ENCODE measurements at regions of chr2 and their contacts with region 1.

Region 1: DNA sequence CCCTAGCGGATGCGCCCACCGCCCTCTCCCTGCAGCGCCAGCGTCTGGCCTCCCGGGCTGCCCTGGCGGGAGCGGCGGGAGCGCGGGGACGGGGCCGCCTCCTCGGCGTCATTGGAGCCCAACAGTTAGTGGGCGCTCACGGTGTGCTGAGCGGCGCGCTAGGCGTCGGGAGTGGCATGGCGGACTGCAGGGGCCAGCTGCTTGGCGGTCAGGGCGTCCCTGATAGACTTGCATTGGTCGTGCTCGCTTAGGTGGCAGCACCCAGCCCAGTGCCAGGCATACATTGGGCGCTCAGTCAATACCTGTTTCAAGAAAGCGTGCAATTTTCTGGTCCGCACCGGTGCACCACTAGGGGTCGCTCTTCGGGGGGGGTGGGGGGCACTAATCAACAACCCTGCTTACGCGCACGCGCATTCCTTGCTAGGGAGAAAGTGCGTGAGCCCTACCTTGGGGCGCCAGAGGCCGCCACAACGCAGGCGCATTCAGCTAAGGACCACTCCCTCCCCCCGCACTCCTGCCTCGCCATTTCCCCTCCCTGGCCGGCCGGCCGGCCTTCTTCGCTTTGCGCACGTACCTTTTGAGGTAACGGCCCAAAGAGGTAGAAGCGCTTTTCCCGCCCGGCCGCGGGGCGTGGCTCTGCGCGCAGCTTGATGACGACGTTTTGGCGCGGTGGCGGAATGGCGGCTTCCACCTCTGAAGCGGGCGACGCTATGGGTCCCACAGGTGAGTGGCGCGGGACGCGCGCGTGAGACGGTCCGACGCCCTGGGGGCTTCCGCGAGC is 411 bp upstream of the MZT2A start:
- DNase-seq: peak; percentile 90 to 98
- H3K4me3 ChIP-seq: peak overlapping the region; percentile 72 to 97 (median 94)
- H3K27ac ChIP-seq: peak overlapping the region; percentile 94
- H3K4me1 ChIP-seq: peaks cover 0 to 8% (median 6%) of the 10 kb centered on the region in 4 experiments; a peak in 6 of 7 replicates
- H3K27me3 ChIP-seq: no peaks in the 10 kb centered on the region
- CTCF ChIP-seq: peak; percentile 63 to 86 (median 77)
- EP300 ChIP-seq: no peak
- POLR2A ChIP-seq: peak; percentile 80 to 84
- RAD21 ChIP-seq: peak; percentile 15 to 54; a peak in 3 of 4 replicates

Region 2: GRCh38 chr2:131413148-131413747 is 79.4 kb before region 1 on chr2:
- CTCF ChIA-PET with region 1: interaction called, 53 read pairs
- POLR2A ChIA-PET with region 1: interaction called, 8 read pairs
- DNase-seq: no peak
- H3K4me3 ChIP-seq: no peak overlapping the region
- H3K27ac ChIP-seq: no peak overlapping the region
- H3K4me1 ChIP-seq: no peaks in the 10 kb centered on the region
- H3K27me3 ChIP-seq: no peaks in the 10 kb centered on the region
- CTCF ChIP-seq: peak in 2 of 3 experiments; percentile 61 to 71; a peak in 2 of 4 replicates
- EP300 ChIP-seq: no peak
- POLR2A ChIP-seq: no peak
- RAD21 ChIP-seq: peak; percentile 81 to 85

Region 3: DNA sequence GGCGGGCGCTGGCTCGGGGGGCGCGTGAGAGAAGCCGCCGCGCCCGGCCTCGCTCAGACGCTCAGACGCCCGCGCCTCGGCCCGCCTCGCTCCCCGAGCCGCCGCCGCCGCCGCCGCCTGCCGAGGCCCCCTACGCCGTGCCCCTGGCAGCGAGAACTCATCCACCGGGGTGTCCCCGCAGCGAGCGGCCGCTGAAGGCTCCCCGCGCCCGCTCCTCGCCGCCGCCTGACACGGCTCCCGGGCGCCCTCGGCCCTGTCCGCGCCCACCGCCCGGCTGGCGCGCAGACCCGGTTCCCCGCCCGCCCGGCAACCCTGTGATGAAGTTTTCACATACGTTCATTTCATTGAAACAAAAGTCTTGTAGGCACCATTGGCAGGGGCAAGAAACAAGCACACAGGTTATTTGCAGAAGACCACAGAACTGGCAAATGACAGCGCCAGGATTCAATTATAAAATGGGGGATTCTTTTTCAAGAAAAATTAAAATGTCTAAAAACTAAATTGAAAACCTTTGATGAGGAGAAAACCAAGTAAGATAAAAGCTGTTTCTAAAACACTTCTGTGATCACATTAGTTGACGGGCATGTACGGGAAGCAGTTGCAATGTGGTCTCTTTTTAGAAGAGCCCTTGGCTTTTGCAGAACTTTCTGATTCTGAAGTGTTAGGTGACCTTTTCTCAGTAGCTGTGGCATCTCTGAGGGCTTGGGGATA is 67.2 kb before region 1 on chr2:
- CTCF ChIA-PET with region 1: interaction called, 13 read pairs
- POLR2A ChIA-PET with region 1: interaction called, 3 read pairs
- DNase-seq: no peak
- H3K4me3 ChIP-seq: peak overlapping the region; percentile 2 to 57 (median 16); a peak in 6 of 8 replicates
- H3K27ac ChIP-seq: no peak overlapping the region
- H3K4me1 ChIP-seq: peaks cover 0 to 11% (median 2%) of the 10 kb centered on the region in 4 experiments; a peak in 3 of 7 replicates
- H3K27me3 ChIP-seq: peaks cover 5 to 31% (median 17%) of the 10 kb centered on the region in 4 experiments
- CTCF ChIP-seq: no peak
- EP300 ChIP-seq: no peak
- POLR2A ChIP-seq: no peak
- RAD21 ChIP-seq: no peak

Region 4: DNA sequence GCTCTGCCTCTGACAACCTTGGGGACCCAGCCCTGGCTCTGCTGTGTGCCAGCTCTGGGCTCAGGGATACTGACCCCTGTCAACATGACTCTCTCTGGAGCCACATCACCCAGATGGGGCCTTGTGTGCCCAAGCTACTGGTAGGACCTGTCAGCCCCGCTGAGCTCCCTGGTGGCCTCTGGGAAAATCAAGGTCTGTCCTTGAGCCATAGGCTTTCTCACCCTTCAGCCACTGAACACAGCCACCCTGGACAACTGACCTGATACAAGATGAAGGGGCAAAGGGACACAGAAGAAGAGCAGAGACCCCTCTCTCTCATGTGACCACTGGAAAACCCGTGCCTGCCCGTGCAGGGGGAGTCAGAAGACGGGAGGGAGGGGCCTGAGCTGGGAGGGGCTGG is 42.9 kb after region 1 on chr2:
- CTCF ChIA-PET with region 1: no interaction called
- POLR2A ChIA-PET with region 1: no interaction called
- DNase-seq: peak in 1 of 2 experiments; percentile 37
- H3K4me3 ChIP-seq: no peak overlapping the region
- H3K27ac ChIP-seq: no peak overlapping the region
- H3K4me1 ChIP-seq: no peaks in the 10 kb centered on the region
- H3K27me3 ChIP-seq: no peaks in the 10 kb centered on the region
- CTCF ChIP-seq: no peak
- EP300 ChIP-seq: no peak
- POLR2A ChIP-seq: no peak
- RAD21 ChIP-seq: no peak

Measured in H1 (cell line).